H1 (cell line): ENCODE measurements at regions of chr12 and their contacts with region 1.

Region 1: GRCh38 chr12:57309420-57309819 is 58.4 kb upstream of the STAC3 start:
- DNase-seq: no peak
- H3K4me3 ChIP-seq: no peak overlapping the region
- H3K27ac ChIP-seq: no peak overlapping the region
- H3K4me1 ChIP-seq: no peaks in the 10 kb centered on the region
- H3K27me3 ChIP-seq: no peaks in the 10 kb centered on the region
- CTCF ChIP-seq: no peak
- EP300 ChIP-seq: no peak
- POLR2A ChIP-seq: no peak
- RAD21 ChIP-seq: no peak

Region 2: GRCh38 chr12:57242693-57243454 is 66.5 kb before region 1 on chr12:
- CTCF ChIA-PET with region 1: no interaction called
- POLR2A ChIA-PET with region 1: no interaction called
- DNase-seq: peak; percentile 89 to 100
- H3K4me3 ChIP-seq: peak overlapping the region; percentile 36 to 67 (median 56)
- H3K27ac ChIP-seq: no peak overlapping the region
- H3K4me1 ChIP-seq: peaks cover 5 to 42% (median 28%) of the 10 kb centered on the region in 4 experiments
- H3K27me3 ChIP-seq: peaks cover 40 to 59% (median 53%) of the 10 kb centered on the region in 4 experiments
- CTCF ChIP-seq: peak in 2 of 3 experiments; percentile 78 to 90; a peak in 3 of 4 replicates
- EP300 ChIP-seq: no peak
- POLR2A ChIP-seq: no peak
- RAD21 ChIP-seq: peak; percentile 69 to 76

Region 3: DNA sequence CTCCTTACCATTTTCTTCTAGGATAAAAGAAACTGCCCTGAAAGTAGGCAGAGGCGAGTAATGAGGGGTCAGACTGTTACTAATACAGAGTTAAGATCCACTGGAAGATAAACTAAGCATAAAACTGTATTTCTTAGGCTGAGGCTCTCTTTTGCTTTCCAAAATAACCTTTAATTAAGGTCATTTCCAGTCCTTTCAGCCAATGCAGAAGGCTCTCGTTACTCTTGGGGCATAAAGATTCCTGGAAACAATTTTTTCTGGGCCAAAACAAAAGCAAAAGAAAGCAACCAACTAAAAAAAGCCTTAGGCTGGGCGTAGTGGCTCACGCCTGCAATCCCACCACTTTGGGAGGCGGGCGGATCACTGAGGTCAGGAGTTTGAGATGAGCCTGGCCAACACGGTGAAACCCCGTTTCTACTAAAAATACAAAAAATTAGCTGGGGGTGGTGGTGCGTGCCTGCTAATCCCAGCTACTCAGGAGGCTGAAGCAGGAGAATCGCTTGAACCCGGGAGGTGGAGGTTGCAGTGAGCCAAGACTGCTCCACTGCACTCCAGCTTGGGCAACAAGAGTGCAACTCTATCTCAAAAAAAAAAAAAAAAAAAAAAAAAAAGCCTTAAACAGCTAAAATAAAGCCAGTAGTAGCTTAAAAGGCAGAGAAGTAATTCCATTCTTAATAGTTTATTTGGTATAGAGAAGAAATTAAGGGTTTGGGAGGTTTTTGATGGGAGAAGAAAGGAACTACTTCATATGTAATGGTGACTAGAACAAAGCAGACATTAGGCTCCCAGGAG is 10.5 kb after region 1 on chr12:
- CTCF ChIA-PET with region 1: interaction called, 30 read pairs
- POLR2A ChIA-PET with region 1: interaction called, 3 read pairs
- DNase-seq: no peak
- H3K4me3 ChIP-seq: no peak overlapping the region
- H3K27ac ChIP-seq: no peak overlapping the region
- H3K4me1 ChIP-seq: no peaks in the 10 kb centered on the region
- H3K27me3 ChIP-seq: no peaks in the 10 kb centered on the region
- CTCF ChIP-seq: no peak
- EP300 ChIP-seq: no peak
- POLR2A ChIP-seq: no peak
- RAD21 ChIP-seq: no peak

Region 4: GRCh38 chr12:57325395-57325794 is 16.0 kb after region 1 on chr12:
- CTCF ChIA-PET with region 1: interaction called, 30 read pairs
- POLR2A ChIA-PET with region 1: interaction called, 3 read pairs
- DNase-seq: no peak
- H3K4me3 ChIP-seq: no peak overlapping the region
- H3K27ac ChIP-seq: no peak overlapping the region
- H3K4me1 ChIP-seq: no peaks in the 10 kb centered on the region
- H3K27me3 ChIP-seq: no peaks in the 10 kb centered on the region
- CTCF ChIP-seq: no peak
- EP300 ChIP-seq: no peak
- POLR2A ChIP-seq: no peak
- RAD21 ChIP-seq: no peak

Region 5: DNA sequence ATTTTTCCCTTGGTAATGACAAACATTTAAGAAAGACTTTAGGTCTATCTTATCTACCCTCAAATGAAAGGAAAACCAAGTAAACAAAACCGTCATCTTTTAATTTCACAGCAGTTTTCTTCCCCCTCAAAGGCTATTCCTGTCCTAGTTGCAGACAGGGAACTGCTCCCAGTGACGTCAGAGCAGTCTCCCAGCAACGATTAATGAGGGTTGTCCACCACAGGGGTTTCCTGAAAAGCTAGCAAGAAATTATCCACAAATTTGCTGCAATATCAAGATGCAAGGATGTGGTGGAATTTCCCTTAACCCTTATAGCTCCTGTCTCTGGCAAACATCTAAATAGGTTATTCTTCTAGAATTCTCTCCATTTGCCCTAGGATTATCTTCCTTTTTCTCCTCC is 30.7 kb after region 1 on chr12:
- CTCF ChIA-PET with region 1: interaction called, 10 read pairs
- POLR2A ChIA-PET with region 1: interaction called, 3 read pairs
- DNase-seq: no peak
- H3K4me3 ChIP-seq: no peak overlapping the region
- H3K27ac ChIP-seq: no peak overlapping the region
- H3K4me1 ChIP-seq: peaks cover 0 to 3% (median 1%) of the 10 kb centered on the region in 4 experiments; a peak in 2 of 7 replicates
- H3K27me3 ChIP-seq: no peaks in the 10 kb centered on the region
- CTCF ChIP-seq: no peak
- EP300 ChIP-seq: no peak
- POLR2A ChIP-seq: no peak
- RAD21 ChIP-seq: no peak